H1 (cell line): ENCODE measurements at regions of chr16 and their contacts with region 1.

Region 1: DNA sequence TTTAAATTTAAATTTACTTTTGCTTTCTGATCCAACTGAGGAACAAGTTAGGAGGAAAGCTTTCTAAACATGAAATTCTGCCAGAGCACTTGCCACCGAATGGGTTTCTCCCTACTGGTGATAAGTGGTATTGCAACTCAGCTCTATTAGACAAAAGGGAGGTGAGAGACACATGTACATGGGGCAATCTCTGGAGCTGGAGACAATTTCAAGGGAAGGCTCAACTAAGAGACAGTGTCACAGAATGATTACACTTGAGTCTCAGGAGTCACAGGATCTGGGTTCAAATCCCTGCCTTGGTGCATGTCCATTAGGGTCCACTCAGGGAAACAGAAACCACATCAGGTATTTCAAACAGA is 37.4 kb downstream of the SOCS1 start:
- DNase-seq: no peak
- H3K4me3 ChIP-seq: no peak overlapping the region; a peak in 1 of 8 replicates
- H3K27ac ChIP-seq: no peak overlapping the region
- H3K4me1 ChIP-seq: no peaks in the 10 kb centered on the region
- H3K27me3 ChIP-seq: no peaks in the 10 kb centered on the region
- CTCF ChIP-seq: peak in 1 of 3 experiments; percentile 49; a peak in 2 of 4 replicates
- EP300 ChIP-seq: no peak
- POLR2A ChIP-seq: no peak
- RAD21 ChIP-seq: peak in 1 of 2 experiments; percentile 16; a peak in 1 of 4 replicates

Region 2: GRCh38 chr16:11188801-11189740 is 29.5 kb before region 1 on chr16:
- CTCF ChIA-PET with region 1: interaction called, 13 read pairs
- POLR2A ChIA-PET with region 1: interaction called, 3 read pairs
- DNase-seq: no peak
- H3K4me3 ChIP-seq: no peak overlapping the region
- H3K27ac ChIP-seq: no peak overlapping the region
- H3K4me1 ChIP-seq: peaks cover 0 to 3% (median 1%) of the 10 kb centered on the region in 4 experiments; a peak in 2 of 7 replicates
- H3K27me3 ChIP-seq: no peaks in the 10 kb centered on the region
- CTCF ChIP-seq: no peak
- EP300 ChIP-seq: no peak
- POLR2A ChIP-seq: no peak
- RAD21 ChIP-seq: no peak

Region 3: GRCh38 chr16:11201498-11202259 is 16.9 kb before region 1 on chr16:
- CTCF ChIA-PET with region 1: interaction called, 28 read pairs
- POLR2A ChIA-PET with region 1: interaction called, 3 read pairs
- DNase-seq: peak in 1 of 2 experiments; percentile 65
- H3K4me3 ChIP-seq: peak overlapping the region in 1 of 4 experiments; percentile 14; a peak in 3 of 8 replicates
- H3K27ac ChIP-seq: no peak overlapping the region
- H3K4me1 ChIP-seq: peaks cover 7 to 30% (median 20%) of the 10 kb centered on the region in 4 experiments
- H3K27me3 ChIP-seq: no peaks in the 10 kb centered on the region; a peak in 1 of 7 replicates
- CTCF ChIP-seq: no peak
- EP300 ChIP-seq: no peak; a peak in 1 of 3 replicates
- POLR2A ChIP-seq: no peak
- RAD21 ChIP-seq: 0 out of 4 replicates have a peak, but pooled peaks of 1 of the 2 experiments have one; percentile 3